ENCODE measurements at regions of chr1 and their contacts with region 1.

Region 1: DNA sequence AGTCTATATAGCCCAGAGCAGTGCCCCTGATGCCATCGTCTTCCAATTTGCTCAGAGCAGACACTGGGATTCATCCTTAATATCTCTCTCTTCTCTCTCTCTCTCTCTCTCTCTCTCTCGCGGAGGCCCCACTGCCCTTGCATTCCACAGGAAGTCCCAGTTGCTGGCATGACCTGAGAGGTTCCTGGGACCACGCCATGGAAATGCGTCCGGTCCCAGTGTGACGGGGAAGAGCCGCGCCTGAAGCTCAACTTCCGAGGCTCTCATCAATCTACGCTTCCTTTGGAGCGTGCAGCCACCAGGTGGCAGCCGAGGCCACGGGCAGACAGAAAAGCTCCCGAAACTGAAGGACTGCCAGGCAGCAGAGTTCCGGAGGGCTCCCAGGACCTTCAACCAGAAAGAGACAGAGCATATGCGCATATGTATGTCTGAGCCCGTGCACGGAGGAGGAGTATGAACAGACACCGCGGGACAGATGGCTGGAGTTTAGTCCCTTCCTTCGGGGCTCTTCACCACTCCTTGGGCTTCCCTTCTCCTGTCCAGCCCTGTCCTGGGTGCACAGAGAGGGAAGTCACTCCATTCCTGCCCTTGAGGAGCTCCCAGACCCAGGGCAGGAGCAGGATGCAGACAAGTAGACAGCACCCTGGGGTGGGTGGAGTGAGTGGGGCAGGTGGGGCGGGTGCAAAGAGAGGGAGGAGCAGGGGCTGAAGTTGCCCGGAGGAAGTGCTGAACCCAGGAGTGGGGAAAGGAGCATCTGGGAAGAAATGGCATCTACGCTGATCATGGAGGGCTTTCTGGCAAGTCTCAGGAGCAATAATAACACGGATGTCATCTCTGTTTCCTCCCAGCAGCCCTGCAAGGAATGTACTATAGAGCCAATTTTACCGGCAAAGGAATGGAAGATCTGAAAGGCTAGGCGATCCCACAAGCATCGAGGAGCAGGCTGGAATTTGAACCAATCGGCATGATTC is 10.5 kb downstream of the PDZK1IP1 start:
- DNase-seq: peak; percentile 95
- H3K4me3 Mint-ChIP-seq: peak overlapping the region; percentile 56
- H3K27ac Mint-ChIP-seq: peak overlapping the region; percentile 62
- H3K4me1 Mint-ChIP-seq: peaks cover 55% of the 10 kb centered on the region
- H3K27me3 Mint-ChIP-seq: no peaks in the 10 kb centered on the region
- CTCF ChIP-seq: peak; percentile 63

Region 2: DNA sequence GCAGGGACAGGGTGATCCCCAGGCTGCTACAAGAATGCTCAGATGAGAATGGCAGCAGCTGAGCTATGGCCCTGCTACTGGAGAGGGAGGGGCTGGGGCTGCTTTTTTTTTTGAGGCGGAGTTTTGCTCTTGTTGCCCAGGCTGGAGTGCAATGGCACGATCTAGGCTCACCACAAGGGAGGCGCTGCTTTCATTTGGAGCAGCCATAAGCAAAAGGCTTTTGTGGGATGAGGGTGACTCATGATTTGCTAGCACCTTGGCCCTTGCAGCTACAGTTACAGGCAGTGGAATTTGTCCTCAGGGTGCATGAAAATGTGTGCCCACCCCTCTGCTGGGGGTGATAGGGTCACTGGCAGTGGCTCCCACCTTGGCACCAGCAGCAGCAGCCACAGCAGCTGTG is 74.5 kb before region 1 on chr1:
- CTCF ChIA-PET with region 1: no interaction called
- intact Hi-C with region 1: loop called (anchors 5 kb)
- DNase-seq: peak; percentile 51
- H3K4me3 Mint-ChIP-seq: no peak overlapping the region
- H3K27ac Mint-ChIP-seq: no peak overlapping the region
- H3K4me1 Mint-ChIP-seq: peaks cover 9% of the 10 kb centered on the region
- H3K27me3 Mint-ChIP-seq: no peaks in the 10 kb centered on the region
- CTCF ChIP-seq: peak; percentile 24

Region 3: DNA sequence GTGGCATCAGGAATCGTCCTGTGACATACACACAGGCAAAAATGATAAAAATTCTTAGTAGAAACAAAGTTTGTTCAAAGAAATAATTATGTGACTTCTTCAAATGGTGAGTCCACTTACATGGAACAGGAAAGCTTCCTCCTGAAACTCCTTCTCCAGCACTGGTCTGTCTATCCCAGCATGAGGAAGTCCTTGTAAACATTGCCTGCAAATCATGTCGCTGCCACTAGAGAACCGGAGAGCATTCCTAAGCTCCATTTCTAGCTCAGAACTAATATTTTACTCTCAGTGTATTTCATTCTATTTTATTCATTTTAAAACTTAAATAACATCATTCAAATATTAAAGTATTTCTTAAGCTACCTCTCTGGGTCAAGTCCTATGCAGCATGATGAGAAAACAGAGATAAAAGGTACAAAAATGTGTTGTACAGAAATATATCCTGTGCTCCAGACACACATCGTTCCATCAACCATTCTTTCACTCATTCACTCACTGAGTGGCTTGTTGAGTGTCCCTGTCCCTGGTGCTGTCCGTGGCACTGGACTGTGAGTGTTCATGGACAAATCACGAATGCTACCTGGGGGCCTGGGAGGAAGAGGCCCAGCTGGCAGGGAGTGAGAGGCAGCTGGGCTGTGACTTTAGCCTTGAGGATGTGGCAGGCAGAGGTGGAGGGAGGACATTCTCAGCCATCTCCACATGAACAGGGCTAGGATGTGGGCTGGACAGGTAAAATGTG is 32.1 kb before region 1 on chr1:
- CTCF ChIA-PET with region 1: no interaction called
- intact Hi-C with region 1: no loop called
- DNase-seq: no peak
- H3K4me3 Mint-ChIP-seq: no peak overlapping the region
- H3K27ac Mint-ChIP-seq: no peak overlapping the region
- H3K4me1 Mint-ChIP-seq: no peaks in the 10 kb centered on the region
- H3K27me3 Mint-ChIP-seq: peaks cover 56% of the 10 kb centered on the region
- CTCF ChIP-seq: no peak

Region 4: DNA sequence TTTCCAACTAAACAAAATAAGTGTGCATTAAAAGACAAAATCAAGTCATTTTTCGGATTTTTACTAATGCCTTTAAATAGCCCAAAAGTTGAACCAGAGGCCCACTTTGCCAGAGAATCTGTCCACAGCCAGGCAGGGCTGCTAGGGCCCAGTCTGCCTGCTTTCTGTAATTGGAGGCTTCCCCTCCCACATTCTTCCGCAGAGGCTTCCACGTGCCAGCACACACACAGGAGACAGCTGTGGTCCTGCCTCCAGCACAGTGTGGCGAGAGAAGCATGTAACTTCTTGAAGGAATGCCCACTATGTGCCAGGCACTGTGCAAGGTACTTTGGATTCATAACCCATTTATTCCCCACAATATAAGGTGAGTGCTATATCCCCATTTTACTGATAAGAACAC is 21.9 kb after region 1 on chr1:
- CTCF ChIA-PET with region 1: no interaction called
- intact Hi-C with region 1: no loop called
- DNase-seq: no peak
- H3K4me3 Mint-ChIP-seq: no peak overlapping the region
- H3K27ac Mint-ChIP-seq: no peak overlapping the region
- H3K4me1 Mint-ChIP-seq: no peaks in the 10 kb centered on the region
- H3K27me3 Mint-ChIP-seq: peaks cover 53% of the 10 kb centered on the region
- CTCF ChIP-seq: no peak

Region 5: DNA sequence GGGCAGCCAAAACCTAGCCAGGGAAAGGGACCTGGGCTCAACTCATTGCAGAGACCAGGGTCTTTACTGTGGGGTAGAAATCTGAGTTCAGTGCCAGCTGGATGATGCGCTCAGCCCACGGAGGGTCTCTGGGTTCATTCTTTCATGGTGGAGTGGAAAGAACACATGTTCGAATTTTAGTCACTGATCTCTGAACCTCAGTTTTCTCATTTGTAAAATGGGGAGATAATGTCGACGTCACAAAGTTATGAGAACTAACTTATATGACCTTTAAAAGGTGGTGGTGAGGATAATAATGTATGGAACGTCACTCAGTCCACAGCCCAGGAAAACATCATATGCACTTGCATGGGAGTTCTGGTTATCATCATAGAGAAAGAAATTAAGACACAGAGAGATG is 53.9 kb after region 1 on chr1:
- CTCF ChIA-PET with region 1: no interaction called
- intact Hi-C with region 1: no loop called
- DNase-seq: no peak
- H3K4me3 Mint-ChIP-seq: no peak overlapping the region
- H3K27ac Mint-ChIP-seq: no peak overlapping the region
- H3K4me1 Mint-ChIP-seq: peaks cover 7% of the 10 kb centered on the region
- H3K27me3 Mint-ChIP-seq: no peaks in the 10 kb centered on the region
- CTCF ChIP-seq: no peak

Region 6: DNA sequence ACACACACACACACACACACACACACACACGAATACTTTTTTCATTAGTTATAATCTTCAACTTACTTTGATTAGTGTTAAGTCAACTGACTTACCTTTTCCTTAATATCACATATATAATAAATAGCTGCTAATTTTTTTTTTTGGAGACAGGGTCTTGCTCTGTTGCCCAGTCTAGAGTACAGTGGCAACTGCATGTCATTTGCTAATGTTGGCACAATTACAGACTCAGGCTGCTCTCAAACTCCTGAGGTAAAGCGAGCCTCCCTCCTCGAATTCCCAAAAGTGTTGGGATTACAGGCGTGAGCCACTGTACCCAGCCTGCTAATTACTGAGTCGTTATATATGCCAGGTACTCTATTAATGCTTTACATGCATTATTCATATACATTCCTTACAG is 73.5 kb after region 1 on chr1:
- CTCF ChIA-PET with region 1: interaction called, 31 read pairs
- intact Hi-C with region 1: no loop called
- DNase-seq: no peak
- H3K4me3 Mint-ChIP-seq: no peak overlapping the region
- H3K27ac Mint-ChIP-seq: peak overlapping the region; percentile 42
- H3K4me1 Mint-ChIP-seq: peaks cover 15% of the 10 kb centered on the region
- H3K27me3 Mint-ChIP-seq: no peaks in the 10 kb centered on the region
- CTCF ChIP-seq: no peak

Region 7: DNA sequence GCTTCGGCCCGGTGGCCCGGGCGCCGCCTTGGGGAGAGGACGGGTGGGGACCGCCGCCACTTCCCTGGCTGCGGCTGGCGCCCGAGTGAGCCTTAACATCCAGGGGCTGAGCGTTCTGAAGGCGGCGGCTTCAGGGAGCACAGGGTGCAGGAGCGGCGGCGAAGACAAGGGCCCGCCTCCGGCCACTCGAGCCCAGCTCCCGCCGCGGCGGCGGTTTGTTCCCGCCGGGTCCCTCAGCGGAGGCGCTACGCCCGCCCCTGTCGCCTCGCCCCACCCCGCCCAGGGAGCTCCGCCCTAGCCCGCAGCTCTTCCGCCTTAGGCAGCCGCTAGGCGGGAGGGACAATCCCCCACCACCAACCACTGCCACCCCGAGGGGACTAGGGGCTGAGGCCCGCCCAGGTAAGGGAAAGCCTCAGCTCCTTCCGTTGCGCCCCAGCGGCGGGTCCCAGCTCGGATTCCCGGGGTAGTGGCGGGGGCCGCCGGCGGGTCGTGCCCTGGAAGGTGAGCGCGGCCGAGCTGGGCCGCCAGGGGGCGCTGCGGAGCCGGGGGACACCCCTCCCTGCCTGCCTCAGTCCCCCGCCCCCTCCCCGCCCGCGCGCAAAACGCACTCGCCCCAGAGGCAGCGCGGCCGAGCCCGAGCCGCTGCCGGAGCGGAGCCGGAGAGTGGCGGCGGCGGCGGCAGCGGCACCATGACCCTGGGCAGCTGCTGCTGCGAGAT is 258.3 kb after region 1 on chr1 and contains the start of gene FOXD2:
- CTCF ChIA-PET with region 1: interaction called, 11 read pairs
- intact Hi-C with region 1: no loop called
- DNase-seq: peak; percentile 97
- H3K4me3 Mint-ChIP-seq: peak within 1 kb of the TSS; percentile 87
- H3K27ac Mint-ChIP-seq: peak within 1 kb of the TSS; percentile 48
- H3K4me1 Mint-ChIP-seq: peaks cover 15% of the 10 kb centered on the region
- H3K27me3 Mint-ChIP-seq: no peaks in the 10 kb centered on the region
- CTCF ChIP-seq: peak; percentile 99
- total RNA-seq, gene FOXD2: 0.68 and 0.78 TPM in 2 replicates

Measured in Calu3 (cell line).